CD8-positive, alpha-beta T cell (primary cell): ENCODE measurements at regions of chr14 and their contacts with region 1.

Region 1: DNA sequence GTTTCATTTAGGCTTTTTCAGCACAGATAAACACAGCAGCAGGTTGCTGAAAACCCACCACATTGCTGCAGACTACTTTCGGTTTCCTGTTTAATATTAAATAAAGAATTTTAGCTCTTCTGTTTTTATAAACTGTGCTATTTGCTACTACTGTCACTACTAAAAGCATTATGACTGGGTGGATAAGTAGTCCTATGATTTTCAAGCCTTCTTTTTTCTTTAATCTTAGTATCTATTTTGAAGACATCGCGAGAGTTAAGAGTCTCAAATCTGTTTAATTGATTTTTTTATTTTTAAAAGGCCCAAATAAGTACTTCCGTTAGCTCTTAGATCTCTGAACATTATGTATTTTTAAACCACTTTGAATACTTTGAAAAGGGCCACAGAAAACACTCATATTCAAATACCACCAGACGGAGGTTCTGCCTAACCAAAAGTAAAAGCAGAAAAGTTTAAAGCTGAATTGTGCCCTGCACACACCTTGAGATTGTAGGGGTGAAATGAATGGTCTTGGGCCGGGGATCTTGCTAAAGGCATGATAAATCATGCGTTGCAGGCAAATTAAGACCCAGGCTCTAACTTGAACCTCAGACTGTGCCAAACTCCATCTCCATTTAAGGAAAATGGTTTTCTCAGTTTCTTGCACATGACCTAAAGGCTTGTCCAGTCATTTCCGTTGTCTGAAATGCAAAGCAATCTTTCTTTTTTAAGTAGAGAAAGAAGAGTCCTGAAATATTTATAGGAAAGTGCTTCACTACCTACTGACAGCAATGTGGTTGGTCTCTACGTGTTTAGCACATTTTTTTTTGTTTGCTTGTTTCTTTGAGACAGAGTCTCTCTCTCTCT is 13.6 kb upstream of the FOXN3 start:
- DNase-seq: peak in 5 of 9 experiments; percentile 26 to 82 (median 35)
- ATAC-seq: peak; percentile 83
- H3K4me3 ChIP-seq: peak overlapping the region; percentile 43 to 53
- H3K4me3 Mint-ChIP-seq: peak overlapping the region; percentile 73
- H3K27ac ChIP-seq: peak overlapping the region; percentile 48 to 78
- H3K27ac Mint-ChIP-seq: peak overlapping the region; percentile 93
- H3K4me1 ChIP-seq: peaks cover 35% of the 10 kb centered on the region
- H3K4me1 Mint-ChIP-seq: peaks cover 65% of the 10 kb centered on the region
- H3K27me3 ChIP-seq: no peaks in the 10 kb centered on the region
- H3K27me3 Mint-ChIP-seq: no peaks in the 10 kb centered on the region
- CTCF ChIP-seq: no peak

Region 2: DNA sequence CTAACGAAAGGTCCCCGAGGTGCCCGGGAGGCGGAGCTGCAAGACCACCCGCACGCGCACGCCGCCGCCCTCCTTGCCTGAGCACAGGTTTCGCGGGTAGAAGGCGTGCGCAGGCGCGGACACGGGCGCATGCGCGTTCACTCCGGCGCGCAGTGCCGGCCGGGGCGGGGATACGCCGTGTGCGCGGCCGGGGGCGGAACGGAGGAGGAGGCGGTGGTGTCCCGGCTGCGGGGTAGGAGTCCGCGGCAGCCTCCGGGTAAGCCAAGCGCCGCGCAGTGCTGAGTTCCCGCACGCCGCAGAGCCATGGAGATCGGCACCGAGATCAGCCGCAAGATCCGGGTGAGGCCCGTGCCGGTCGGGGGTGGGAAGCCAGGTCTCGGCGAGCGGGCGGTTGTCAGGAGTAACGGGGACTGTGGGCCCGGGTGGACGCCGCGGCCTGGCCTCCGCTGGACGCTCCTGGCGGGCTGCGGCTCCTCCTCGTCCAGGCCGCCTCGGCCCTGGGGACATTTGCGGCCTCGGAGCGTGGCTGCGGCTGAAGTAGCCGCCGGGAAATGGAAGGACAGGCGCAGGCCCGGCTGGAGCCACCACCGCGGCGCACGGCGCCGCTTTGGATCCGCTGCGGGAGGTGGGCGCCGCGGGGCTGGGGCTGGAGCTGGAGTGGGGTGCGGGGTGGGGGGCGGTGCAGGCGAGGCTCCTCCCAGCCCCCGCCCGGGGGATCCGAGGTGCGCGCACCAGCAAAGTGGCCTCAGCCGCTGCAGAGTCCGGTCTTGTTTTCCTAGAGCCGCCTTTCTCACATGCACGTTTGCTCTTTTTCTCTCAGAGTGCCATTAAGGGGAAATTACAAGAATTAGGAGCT is 867.6 kb before region 1 on chr14 and contains the start of gene ZC3H14:
- CTCF ChIA-PET with region 1: no interaction called
- POLR2A ChIA-PET with region 1: no interaction called
- intact Hi-C with region 1: loop called in 1 of 2 experiments (anchors 5 kb)
- DNase-seq: peak; percentile 69 to 94 (median 86)
- ATAC-seq: peak; percentile 95
- H3K4me3 ChIP-seq: peak within 1 kb of the TSS; percentile 75 to 91
- H3K4me3 Mint-ChIP-seq: peak within 1 kb of the TSS; percentile 96
- H3K27ac ChIP-seq: peak within 1 kb of the TSS; percentile 52 to 66
- H3K27ac Mint-ChIP-seq: peak within 1 kb of the TSS; percentile 91
- H3K4me1 ChIP-seq: peaks cover 20% of the 10 kb centered on the region
- H3K4me1 Mint-ChIP-seq: peaks cover 35% of the 10 kb centered on the region
- H3K27me3 ChIP-seq: no peaks in the 10 kb centered on the region
- H3K27me3 Mint-ChIP-seq: peaks cover 7% of the 10 kb centered on the region
- CTCF ChIP-seq: no peak
- total RNA-seq, gene ZC3H14: 36.3 to 39.3 TPM

Region 3: DNA sequence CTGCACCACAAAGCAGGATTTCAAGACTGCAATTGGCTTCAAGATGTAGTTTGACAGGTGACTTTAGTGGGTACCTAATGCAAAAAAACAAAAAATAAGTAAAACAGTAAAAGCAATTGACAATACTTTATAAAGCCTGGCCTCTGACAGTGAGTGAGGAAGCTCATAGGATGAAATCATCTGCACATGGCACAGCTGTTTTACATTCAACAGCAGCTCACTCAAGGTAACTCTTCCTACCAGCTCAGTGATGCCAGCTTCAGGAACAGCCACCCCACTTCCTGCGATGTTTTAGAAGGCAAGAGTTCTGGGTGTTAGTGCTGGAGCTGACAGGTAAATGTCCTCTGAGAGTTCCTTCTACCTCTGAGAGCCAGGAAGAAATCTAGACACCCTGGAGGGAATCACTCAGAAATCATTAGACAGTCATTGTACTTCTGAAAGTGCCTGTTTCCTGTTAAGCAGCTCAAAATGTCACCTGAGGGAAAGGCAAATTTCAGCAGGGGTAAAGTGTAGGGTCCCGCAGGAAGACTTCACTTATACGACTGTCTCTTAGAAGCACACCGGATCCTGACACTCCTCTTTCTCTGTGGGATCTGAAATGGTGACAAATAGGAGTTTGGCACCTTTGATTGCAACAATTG is 113.4 kb before region 1 on chr14:
- CTCF ChIA-PET with region 1: no interaction called
- POLR2A ChIA-PET with region 1: no interaction called
- intact Hi-C with region 1: no loop called
- DNase-seq: no peak
- ATAC-seq: no peak
- H3K4me3 ChIP-seq: no peak overlapping the region
- H3K4me3 Mint-ChIP-seq: no peak overlapping the region
- H3K27ac ChIP-seq: no peak overlapping the region
- H3K27ac Mint-ChIP-seq: peak overlapping the region; percentile 50
- H3K4me1 ChIP-seq: peaks cover 11% of the 10 kb centered on the region
- H3K4me1 Mint-ChIP-seq: peaks cover 63% of the 10 kb centered on the region
- H3K27me3 ChIP-seq: no peaks in the 10 kb centered on the region
- H3K27me3 Mint-ChIP-seq: no peaks in the 10 kb centered on the region
- CTCF ChIP-seq: no peak

Region 4: DNA sequence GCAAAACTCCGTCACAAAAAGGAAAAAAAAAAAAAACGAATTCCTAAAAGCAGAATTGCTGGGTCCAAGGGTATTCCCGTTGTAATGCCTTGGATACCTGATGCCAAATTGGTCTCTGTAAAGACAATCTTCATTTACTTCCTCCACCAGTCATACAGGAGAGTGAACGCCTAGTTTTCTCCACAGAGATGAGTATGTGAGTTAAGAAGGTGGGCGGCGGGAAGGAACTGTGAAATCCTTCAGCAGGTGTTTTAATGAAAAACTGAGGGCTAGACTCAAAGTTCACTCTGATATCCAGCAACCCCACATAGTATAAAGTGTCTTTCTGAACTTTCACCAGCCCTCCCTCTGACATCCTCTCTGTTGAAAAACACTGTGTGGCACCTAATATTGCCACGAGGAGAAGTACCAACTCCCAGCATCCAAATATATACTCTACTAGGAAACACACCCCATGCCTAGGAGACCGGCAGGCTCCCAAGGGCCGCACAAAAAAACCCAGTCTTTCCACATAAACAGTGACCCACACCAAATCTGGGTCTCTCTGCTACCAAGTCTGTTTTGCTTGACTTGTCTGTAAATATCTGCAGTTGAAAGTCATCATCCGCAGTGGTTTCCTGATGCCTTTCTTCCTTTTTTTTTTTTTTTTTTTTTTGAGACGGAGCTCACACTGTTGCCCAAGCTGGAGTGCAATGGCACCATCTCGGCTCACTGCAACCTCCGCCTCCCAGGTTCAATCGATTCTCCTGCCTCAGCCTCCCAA is 16.7 kb after region 1 on chr14:
- CTCF ChIA-PET with region 1: no interaction called
- POLR2A ChIA-PET with region 1: interaction called, 4 read pairs
- intact Hi-C with region 1: loop called in 1 of 2 experiments (anchors 2 kb)
- DNase-seq: peak in 1 of 9 experiments; percentile 44
- ATAC-seq: peak; percentile 34
- H3K4me3 ChIP-seq: no peak overlapping the region
- H3K4me3 Mint-ChIP-seq: peak overlapping the region; percentile 65
- H3K27ac ChIP-seq: no peak overlapping the region
- H3K27ac Mint-ChIP-seq: peak overlapping the region; percentile 91
- H3K4me1 ChIP-seq: peaks cover 38% of the 10 kb centered on the region
- H3K4me1 Mint-ChIP-seq: peaks cover 76% of the 10 kb centered on the region
- H3K27me3 ChIP-seq: no peaks in the 10 kb centered on the region
- H3K27me3 Mint-ChIP-seq: no peaks in the 10 kb centered on the region
- CTCF ChIP-seq: no peak

Region 5: GRCh38 chr14:89466484-89466883 is 35.9 kb after region 1 on chr14:
- CTCF ChIA-PET with region 1: no interaction called
- POLR2A ChIA-PET with region 1: interaction called, 3 read pairs
- intact Hi-C with region 1: loop called in 1 of 2 experiments (anchors 5 kb)
- DNase-seq: peak; percentile 15 to 87 (median 54)
- ATAC-seq: peak; percentile 95
- H3K4me3 ChIP-seq: peak overlapping the region; percentile 14 to 24
- H3K4me3 Mint-ChIP-seq: peak overlapping the region; percentile 59
- H3K27ac ChIP-seq: peak overlapping the region in 1 of 2 experiments; percentile 63
- H3K27ac Mint-ChIP-seq: peak overlapping the region; percentile 88
- H3K4me1 ChIP-seq: peaks cover 36% of the 10 kb centered on the region
- H3K4me1 Mint-ChIP-seq: peaks cover 64% of the 10 kb centered on the region
- H3K27me3 ChIP-seq: no peaks in the 10 kb centered on the region
- H3K27me3 Mint-ChIP-seq: no peaks in the 10 kb centered on the region
- CTCF ChIP-seq: no peak

Region 6: DNA sequence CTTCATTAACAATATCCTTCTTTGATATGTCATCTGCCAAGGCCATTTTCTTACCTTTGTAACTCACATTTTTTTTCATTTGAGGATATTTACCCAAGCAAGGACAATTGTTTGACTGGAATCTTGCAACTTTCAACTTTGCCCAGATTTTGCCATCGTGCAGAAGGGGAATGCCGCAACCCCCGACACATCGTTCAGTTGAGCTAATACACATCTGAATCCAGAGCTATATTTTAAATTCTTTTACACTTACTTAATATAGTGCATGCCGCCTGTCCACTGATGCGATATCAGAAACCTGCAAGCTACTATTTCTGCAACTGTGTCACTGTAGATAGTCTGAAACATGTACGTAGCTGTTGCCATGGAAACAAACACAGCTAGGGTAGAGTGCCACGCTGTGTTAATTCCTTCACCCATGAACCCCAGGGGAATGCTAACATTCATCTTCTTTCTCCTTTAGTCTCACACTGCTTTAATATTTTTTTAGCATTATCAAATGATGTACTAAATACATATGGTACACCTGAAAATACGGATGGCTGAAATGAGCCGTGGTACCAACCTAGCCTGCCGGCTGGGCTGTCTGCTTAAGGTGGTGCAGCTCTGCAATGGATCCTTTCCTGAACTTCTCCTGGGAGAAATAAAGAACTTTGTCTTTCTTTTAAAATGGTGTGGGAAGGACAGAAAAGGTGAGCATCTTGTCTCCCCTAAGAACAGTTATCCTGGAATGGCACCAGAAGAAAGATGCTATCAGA is 63.4 kb after region 1 on chr14:
- CTCF ChIA-PET with region 1: no interaction called
- POLR2A ChIA-PET with region 1: no interaction called
- intact Hi-C with region 1: no loop called
- DNase-seq: peak in 1 of 9 experiments; percentile 45
- ATAC-seq: no peak
- H3K4me3 ChIP-seq: no peak overlapping the region
- H3K4me3 Mint-ChIP-seq: no peak overlapping the region
- H3K27ac ChIP-seq: no peak overlapping the region
- H3K27ac Mint-ChIP-seq: peak overlapping the region; percentile 28
- H3K4me1 ChIP-seq: no peaks in the 10 kb centered on the region
- H3K4me1 Mint-ChIP-seq: peaks cover 46% of the 10 kb centered on the region
- H3K27me3 ChIP-seq: no peaks in the 10 kb centered on the region
- H3K27me3 Mint-ChIP-seq: no peaks in the 10 kb centered on the region
- CTCF ChIP-seq: no peak